ENCODE measurements at regions of chr5 and their contacts with region 1.

Region 1: DNA sequence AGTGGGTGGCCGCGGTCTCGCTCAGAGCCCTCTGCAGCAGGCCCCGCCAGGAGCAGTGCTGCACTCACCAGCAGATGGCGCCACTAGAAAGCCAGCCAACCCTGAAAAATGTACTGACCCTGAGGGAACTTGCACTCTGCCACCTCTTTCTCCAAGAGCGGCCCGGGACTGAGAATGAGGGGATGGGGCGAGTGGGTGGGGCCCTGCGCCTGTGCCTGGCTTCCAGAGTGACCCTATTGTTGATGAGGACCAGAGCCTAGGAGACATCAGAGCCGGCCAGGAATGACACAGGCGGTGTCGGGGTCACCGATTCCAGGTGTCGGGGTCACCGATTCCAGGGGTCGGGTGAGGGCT is 2.9 kb upstream of the IL17B start:
- DNase-seq: peak; percentile 81 to 93 (median 93)
- ATAC-seq: peak; percentile 75 to 80
- H3K4me3 ChIP-seq: no peak overlapping the region
- H3K27ac ChIP-seq: peak overlapping the region; percentile 91
- H3K4me1 ChIP-seq: peaks cover 8% of the 10 kb centered on the region
- H3K27me3 ChIP-seq: no peaks in the 10 kb centered on the region

Region 2: GRCh38 chr5:149434162-149435014 is 52.4 kb after region 1 on chr5:
- intact Hi-C with region 1: loop called (anchors 2 to 5 kb)
- DNase-seq: peak; percentile 65 to 86 (median 81)
- ATAC-seq: peak; percentile 17 to 34
- H3K4me3 ChIP-seq: no peak overlapping the region
- H3K27ac ChIP-seq: peak overlapping the region; percentile 29
- H3K4me1 ChIP-seq: peaks cover 15% of the 10 kb centered on the region
- H3K27me3 ChIP-seq: no peaks in the 10 kb centered on the region

Region 3: GRCh38 chr5:149561848-149562247 is 179.9 kb after region 1 on chr5:
- intact Hi-C with region 1: loop called (anchors 2 to 10 kb)
- DNase-seq: no peak
- ATAC-seq: peak; percentile 92 to 95
- H3K4me3 ChIP-seq: no peak overlapping the region
- H3K27ac ChIP-seq: peak overlapping the region; percentile 96
- H3K4me1 ChIP-seq: peaks cover 8% of the 10 kb centered on the region
- H3K27me3 ChIP-seq: no peaks in the 10 kb centered on the region

Region 4: GRCh38 chr5:149567226-149567625 is 185.3 kb after region 1 on chr5:
- intact Hi-C with region 1: loop called (anchors 2 to 10 kb)
- DNase-seq: no peak
- ATAC-seq: no peak
- H3K4me3 ChIP-seq: no peak overlapping the region
- H3K27ac ChIP-seq: no peak overlapping the region
- H3K4me1 ChIP-seq: peaks cover 5% of the 10 kb centered on the region
- H3K27me3 ChIP-seq: no peaks in the 10 kb centered on the region

Region 5: GRCh38 chr5:149581192-149581861 is 199.4 kb after region 1 on chr5 and contains the start of gene ARHGEF37:
- intact Hi-C with region 1: no loop called
- DNase-seq: peak; percentile 93 to 97 (median 97)
- ATAC-seq: peak; percentile 88 to 89
- H3K4me3 ChIP-seq: peak within 1 kb of the TSS; percentile 50
- H3K27ac ChIP-seq: peak within 1 kb of the TSS; percentile 90
- H3K4me1 ChIP-seq: no peaks in the 10 kb centered on the region
- H3K27me3 ChIP-seq: no peaks in the 10 kb centered on the region
- total RNA-seq, gene ARHGEF37: 20.6 to 25.7 (median 23.2) TPM

Region 6: DNA sequence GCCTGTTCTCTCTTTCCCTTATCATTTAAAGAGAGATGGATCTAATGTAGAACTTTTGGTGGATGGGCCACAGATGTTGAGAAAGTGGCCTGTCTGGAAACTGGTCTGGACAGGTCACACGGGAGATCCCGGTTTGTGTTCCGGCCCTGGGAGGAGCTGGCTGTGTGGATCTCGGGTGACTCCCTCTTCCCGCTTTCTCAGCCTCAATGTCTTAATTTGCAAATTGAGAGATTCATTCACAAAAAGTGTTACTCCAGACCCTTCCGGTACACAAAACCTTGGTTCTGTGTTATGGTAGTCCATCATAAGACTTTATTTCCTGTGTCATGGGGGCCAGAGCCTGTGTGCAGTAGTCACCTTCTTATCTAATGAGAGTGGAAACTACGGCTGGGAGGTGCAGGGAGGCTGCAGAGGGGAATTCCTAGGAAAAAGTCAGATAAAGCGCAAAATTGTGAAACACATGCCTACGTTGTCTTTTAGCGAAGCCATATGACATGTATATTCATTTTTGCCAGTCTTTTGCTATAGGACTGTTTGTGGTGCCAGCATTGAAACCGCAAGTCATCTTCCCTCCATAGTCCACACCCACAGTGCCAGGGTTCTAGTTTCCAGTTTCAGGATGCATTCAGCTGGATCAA is 428.8 kb after region 1 on chr5:
- intact Hi-C with region 1: no loop called
- DNase-seq: no peak
- ATAC-seq: peak in 1 of 2 donors; percentile 41
- H3K4me3 ChIP-seq: no peak overlapping the region
- H3K27ac ChIP-seq: peak overlapping the region; percentile 51
- H3K4me1 ChIP-seq: peaks cover 15% of the 10 kb centered on the region
- H3K27me3 ChIP-seq: no peaks in the 10 kb centered on the region